B cell (primary cell): ENCODE measurements at regions of chr5 and their contacts with region 1.

Region 1: DNA sequence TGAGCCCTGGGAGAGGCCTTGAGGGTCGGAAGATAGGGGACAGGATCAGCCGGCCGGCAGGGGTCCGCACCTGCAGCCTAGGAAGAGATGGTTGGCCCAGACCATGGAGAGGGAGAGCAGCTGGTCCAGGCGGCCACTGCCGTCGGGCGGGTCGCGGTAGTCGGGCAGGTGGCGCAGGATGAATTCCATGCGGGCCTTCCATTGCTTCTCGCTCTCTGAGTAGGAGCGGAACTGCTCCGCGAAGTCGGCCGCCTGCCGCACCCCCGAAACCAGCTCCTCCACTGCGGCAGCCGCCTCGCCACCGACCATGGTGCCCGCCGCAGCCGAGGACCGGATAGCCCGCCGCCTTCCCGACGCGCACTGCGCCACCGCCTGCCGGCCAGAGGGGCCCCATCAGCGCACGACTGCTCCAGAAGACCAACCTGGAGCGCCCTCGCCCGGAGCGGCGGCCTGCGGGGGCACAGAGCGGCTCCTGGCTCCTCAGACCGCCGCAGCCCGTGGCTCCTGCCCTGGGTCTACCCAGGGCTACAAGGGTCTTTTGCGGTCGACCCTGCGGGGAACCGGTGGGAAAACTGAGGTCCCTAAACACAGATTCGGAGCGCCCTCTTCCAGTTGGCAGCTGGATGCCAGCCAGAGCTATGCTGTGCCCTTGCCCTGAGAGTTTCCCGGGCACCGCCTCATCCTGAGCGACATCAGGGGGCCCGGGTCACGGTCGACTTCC is at the start of gene CDKN2AIPNL:
- DNase-seq: peak; percentile 92
- ATAC-seq: peak; percentile 100
- H3K4me3 ChIP-seq: peak within 1 kb of the TSS; percentile 6 to 99 (median 87)
- H3K4me3 Mint-ChIP-seq: peak within 1 kb of the TSS; percentile 94
- H3K27ac ChIP-seq: peak within 1 kb of the TSS; percentile 64 to 68
- H3K27ac Mint-ChIP-seq: peak within 1 kb of the TSS; percentile 93
- H3K4me1 ChIP-seq: peaks cover 15 to 19% of the 10 kb centered on the region in 2 donors
- H3K4me1 Mint-ChIP-seq: peaks cover 39% of the 10 kb centered on the region
- H3K27me3 ChIP-seq: no peaks in the 10 kb centered on the region
- H3K27me3 Mint-ChIP-seq: no peaks in the 10 kb centered on the region
- CTCF ChIP-seq: peak; percentile 83
- total RNA-seq, gene CDKN2AIPNL: 15.8 and 17.2 TPM in 2 replicates

Region 2: DNA sequence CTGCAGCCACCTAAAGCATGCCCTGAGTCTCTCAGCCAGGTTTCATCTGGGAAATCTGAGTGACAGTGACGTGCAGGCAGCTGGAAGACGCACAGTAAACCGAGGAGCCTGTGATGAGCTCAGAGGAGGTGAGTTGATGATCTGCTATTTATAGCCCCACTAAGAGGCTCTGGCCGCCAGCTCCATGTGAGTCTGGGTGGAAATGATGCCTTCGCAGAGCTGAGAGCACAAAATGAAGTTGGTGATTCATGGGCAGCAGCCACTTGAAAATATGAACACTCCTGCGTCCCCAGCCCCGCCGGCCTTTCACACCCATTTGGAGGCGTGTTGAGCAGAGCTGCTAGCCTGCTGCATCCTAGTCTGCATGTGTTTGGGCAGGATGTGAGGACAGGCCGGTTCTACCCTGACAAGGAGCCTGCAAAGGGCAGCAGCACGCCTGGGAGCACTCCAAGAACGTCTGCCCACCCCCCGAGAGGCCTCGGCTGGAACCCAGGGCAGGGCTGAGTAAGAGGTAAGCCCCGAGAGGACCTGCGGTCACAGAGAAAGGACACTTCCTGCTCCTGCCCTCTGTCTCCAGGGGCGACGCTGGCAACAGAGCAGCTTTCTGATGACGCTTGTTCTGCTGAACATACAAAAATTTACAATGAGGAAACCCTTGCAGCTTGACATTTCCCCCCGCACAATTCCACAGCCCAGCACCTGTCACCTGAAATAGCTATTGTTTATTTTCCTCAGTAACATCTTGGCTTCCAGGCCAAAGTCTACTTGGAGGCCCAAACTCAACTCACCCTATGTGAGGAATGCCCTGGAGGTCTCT is 25.0 kb after region 1 on chr5:
- CTCF ChIA-PET with region 1: interaction called, 11 read pairs
- POLR2A ChIA-PET with region 1: interaction called, 6 read pairs
- intact Hi-C with region 1: loop called (anchors 1 kb)
- DNase-seq: peak; percentile 76
- ATAC-seq: peak; percentile 96
- H3K4me3 ChIP-seq: peak overlapping the region in 2 of 5 experiments; percentile 18 to 44
- H3K4me3 Mint-ChIP-seq: peak overlapping the region; percentile 53
- H3K27ac ChIP-seq: peak overlapping the region; percentile 43 to 64
- H3K27ac Mint-ChIP-seq: peak overlapping the region; percentile 70
- H3K4me1 ChIP-seq: peaks cover 12 to 17% of the 10 kb centered on the region in 2 donors
- H3K4me1 Mint-ChIP-seq: peaks cover 30% of the 10 kb centered on the region
- H3K27me3 ChIP-seq: peaks cover 0 to 3% (median 0%) of the 10 kb centered on the region in 4 experiments
- H3K27me3 Mint-ChIP-seq: no peaks in the 10 kb centered on the region
- CTCF ChIP-seq: no peak

Region 3: DNA sequence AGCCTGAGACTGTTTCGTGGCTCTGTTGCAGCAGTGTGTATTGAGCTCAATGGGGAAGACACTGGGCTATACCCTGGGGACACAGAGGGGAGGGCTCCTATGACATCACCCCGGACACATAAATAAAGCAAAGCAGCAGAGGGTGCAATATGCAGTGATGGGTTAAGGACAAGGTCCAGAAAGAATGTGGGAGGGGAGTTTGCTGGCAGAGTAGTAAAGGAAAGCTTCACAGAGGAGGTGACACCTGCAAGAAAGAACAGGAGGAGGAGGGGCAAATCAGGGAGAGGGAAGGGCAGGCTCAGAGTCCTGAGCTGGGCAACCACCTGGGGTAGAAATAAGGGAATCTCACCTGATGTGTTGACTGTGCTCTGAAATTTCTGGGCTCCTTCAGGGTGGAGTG is 35.2 kb after region 1 on chr5:
- CTCF ChIA-PET with region 1: interaction called, 31 read pairs
- POLR2A ChIA-PET with region 1: interaction called, 3 read pairs
- intact Hi-C with region 1: loop called (anchors 1 kb)
- DNase-seq: peak; percentile 84
- ATAC-seq: peak; percentile 86
- H3K4me3 ChIP-seq: peak overlapping the region in 1 of 5 experiments; percentile 38
- H3K4me3 Mint-ChIP-seq: peak overlapping the region; percentile 79
- H3K27ac ChIP-seq: peak overlapping the region; percentile 47 to 52
- H3K27ac Mint-ChIP-seq: peak overlapping the region; percentile 87
- H3K4me1 ChIP-seq: peaks cover 37 to 42% of the 10 kb centered on the region in 2 donors
- H3K4me1 Mint-ChIP-seq: peaks cover 56% of the 10 kb centered on the region
- H3K27me3 ChIP-seq: no peaks in the 10 kb centered on the region
- H3K27me3 Mint-ChIP-seq: no peaks in the 10 kb centered on the region
- CTCF ChIP-seq: no peak

Region 4: DNA sequence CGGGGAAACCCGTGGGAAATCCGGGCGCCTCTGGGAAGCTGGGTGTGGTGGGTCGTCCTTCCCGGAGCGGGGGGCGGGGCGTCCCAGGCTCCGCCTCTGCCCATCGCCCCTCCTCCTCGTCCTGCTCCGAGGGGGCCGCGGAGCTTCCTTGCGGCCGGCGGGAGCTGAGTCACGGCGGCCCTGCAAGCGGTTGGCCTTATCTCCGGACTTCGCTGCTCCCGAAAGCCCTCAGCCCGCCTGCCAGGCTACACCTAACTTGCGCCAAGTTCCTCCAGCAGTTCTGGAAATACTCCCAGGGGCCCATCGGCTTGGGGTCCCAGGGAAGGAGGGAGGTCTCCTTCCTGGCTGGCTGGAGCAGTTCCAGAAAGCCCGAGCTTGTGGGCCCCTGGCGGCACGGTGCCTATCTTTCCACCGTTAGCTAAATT is 54.1 kb after region 1 on chr5:
- CTCF ChIA-PET with region 1: interaction called, 13 read pairs
- POLR2A ChIA-PET with region 1: no interaction called
- intact Hi-C with region 1: loop called (anchors 1 kb)
- DNase-seq: peak; percentile 65
- ATAC-seq: peak; percentile 82
- H3K4me3 ChIP-seq: peak overlapping the region; percentile 56 to 76 (median 58)
- H3K4me3 Mint-ChIP-seq: peak overlapping the region; percentile 89
- H3K27ac ChIP-seq: peak overlapping the region in 1 of 2 donors; percentile 42
- H3K27ac Mint-ChIP-seq: peak overlapping the region; percentile 87
- H3K4me1 ChIP-seq: peaks cover 26 to 36% of the 10 kb centered on the region in 2 donors
- H3K4me1 Mint-ChIP-seq: peaks cover 41% of the 10 kb centered on the region
- H3K27me3 ChIP-seq: no peaks in the 10 kb centered on the region
- H3K27me3 Mint-ChIP-seq: no peaks in the 10 kb centered on the region
- CTCF ChIP-seq: no peak

Region 5: GRCh38 chr5:134541736-134542376 is 130.2 kb after region 1 on chr5:
- CTCF ChIA-PET with region 1: interaction called, 8 read pairs
- POLR2A ChIA-PET with region 1: interaction called, 5 read pairs
- intact Hi-C with region 1: loop called (anchors 5 kb)
- DNase-seq: no peak
- ATAC-seq: no peak
- H3K4me3 ChIP-seq: no peak overlapping the region
- H3K4me3 Mint-ChIP-seq: peak overlapping the region; percentile 78
- H3K27ac ChIP-seq: peak overlapping the region; percentile 87 to 95
- H3K27ac Mint-ChIP-seq: peak overlapping the region; percentile 91
- H3K4me1 ChIP-seq: peaks cover 74 to 75% of the 10 kb centered on the region in 2 donors
- H3K4me1 Mint-ChIP-seq: peaks cover 70% of the 10 kb centered on the region
- H3K27me3 ChIP-seq: no peaks in the 10 kb centered on the region
- H3K27me3 Mint-ChIP-seq: no peaks in the 10 kb centered on the region
- CTCF ChIP-seq: no peak